Activated CD4-positive, alpha-beta memory T cell treated with anti-CD3 and anti-CD28 coated beads, Interleukin-2, amount 10 ng/mL, durations not matched to agents 7 days and 5 days (primary cell): ENCODE measurements at regions of chr10 and their contacts with region 1.

Region 1: GRCh38 chr10:101858723-101859500 is 15.3 kb upstream of the KCNIP2 start:
- DNase-seq: no peak
- H3K4me3 Mint-ChIP-seq: no peak overlapping the region
- H3K27ac Mint-ChIP-seq: peak overlapping the region; percentile 48
- H3K4me1 Mint-ChIP-seq: peaks cover 26% of the 10 kb centered on the region
- H3K27me3 Mint-ChIP-seq: no peaks in the 10 kb centered on the region

Region 2: DNA sequence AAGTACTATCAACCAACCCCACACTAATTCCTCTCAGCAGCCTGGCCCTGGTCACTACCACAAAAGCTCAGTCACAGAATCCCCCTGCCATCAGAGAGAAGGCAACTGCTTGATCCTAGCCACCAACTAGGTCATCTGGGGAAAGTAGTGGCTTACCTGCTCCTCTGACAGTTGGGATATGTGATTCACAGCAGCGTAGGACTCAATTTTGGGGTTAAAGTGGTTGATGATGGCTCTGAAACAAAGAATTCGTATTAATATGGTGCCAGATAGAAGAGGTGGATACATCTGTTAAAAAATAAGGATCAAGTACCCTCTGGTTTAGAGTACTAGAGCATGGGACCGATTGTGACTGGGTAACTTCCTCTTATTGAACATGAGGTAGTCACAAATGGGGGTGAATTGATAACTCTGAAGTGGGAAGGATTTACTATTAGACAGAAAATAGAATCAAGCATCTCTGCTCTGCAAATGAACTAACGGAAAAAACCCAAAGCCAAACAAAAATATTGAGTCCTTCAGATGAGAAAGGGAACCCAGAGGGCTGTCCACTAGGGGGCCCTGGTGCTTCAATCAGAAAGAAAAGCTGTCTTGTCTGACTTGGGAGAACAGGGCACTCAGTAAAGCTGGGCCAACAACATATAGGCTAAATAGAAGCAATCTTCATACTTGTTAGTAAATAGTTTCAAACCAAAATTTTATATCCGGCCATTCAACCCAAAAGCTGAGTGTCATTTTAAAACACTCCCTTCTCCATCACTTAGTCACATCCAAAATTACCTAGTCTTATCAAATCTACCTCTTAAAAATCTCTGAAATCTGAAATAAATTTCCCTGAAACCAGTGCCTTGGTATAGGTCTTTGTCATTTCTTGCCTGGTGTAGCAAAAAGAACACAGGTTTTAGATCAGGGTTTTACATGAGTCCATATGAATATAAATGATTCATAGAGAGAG is 30.6 kb after region 1 on chr10:
- CTCF ChIA-PET with region 1: interaction called, 14 read pairs
- POLR2A ChIA-PET with region 1: no interaction called
- DNase-seq: peak; percentile 74
- H3K4me3 Mint-ChIP-seq: no peak overlapping the region
- H3K27ac Mint-ChIP-seq: no peak overlapping the region
- H3K4me1 Mint-ChIP-seq: peaks cover 14% of the 10 kb centered on the region
- H3K27me3 Mint-ChIP-seq: no peaks in the 10 kb centered on the region